Activated B cell treated with CpG ODN at 0.5 μM for 24 hours (primary cell): ENCODE measurements at regions of chr9 and their contacts with region 1.

Region 1: DNA sequence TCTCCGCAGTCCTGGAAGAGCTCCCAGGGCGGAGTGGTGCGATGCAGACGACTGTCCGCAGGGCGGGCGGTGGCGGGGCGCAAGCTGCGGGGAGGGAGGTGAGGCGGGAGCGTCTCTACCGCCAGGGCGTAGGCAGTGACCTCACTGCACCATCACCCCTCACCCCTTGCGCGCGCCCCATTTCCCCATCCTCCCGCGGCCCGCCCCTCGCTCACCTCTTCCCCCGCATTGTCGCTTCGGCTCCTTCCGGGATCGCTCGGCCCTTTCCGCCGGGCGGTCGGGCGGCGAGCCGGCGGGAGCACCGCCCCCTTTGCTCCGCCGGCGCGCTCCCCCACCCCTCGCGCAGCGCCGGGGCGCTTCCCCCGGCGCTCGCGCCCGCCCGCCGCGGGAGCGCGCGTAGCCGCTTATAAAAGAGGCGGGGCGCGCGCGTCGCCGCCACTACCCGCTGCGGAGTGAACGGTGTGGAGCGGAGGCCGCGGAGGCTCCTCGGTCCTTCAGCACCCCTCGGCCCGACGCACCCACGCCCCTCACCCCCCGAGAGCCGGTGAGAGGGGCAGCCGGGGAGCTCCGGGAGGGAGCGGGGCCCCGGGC is at the start of gene SPTAN1:
- DNase-seq: peak; percentile 94
- ATAC-seq: peak; percentile 92
- H3K4me3 Mint-ChIP-seq: peak within 1 kb of the TSS; percentile 90
- H3K27ac Mint-ChIP-seq: peak within 1 kb of the TSS; percentile 90
- H3K4me1 Mint-ChIP-seq: peaks cover 22% of the 10 kb centered on the region
- H3K27me3 Mint-ChIP-seq: no peaks in the 10 kb centered on the region
- CTCF ChIP-seq: no peak
- total RNA-seq, gene SPTAN1: 208 and 237 TPM in 2 replicates

Region 2: GRCh38 chr9:128370826-128371621 is 181.2 kb before region 1 on chr9 and contains the start of gene URM1:
- CTCF ChIA-PET with region 1: no interaction called
- POLR2A ChIA-PET with region 1: interaction called, 10 read pairs
- intact Hi-C with region 1: loop called (anchors 2 kb)
- DNase-seq: peak; percentile 96
- ATAC-seq: peak; percentile 91
- H3K4me3 Mint-ChIP-seq: peak within 1 kb of the TSS; percentile 97
- H3K27ac Mint-ChIP-seq: peak within 1 kb of the TSS; percentile 94
- H3K4me1 Mint-ChIP-seq: peaks cover 31% of the 10 kb centered on the region
- H3K27me3 Mint-ChIP-seq: no peaks in the 10 kb centered on the region
- CTCF ChIP-seq: no peak
- total RNA-seq, gene URM1: 55.8 and 65.1 TPM in 2 replicates

Region 3: DNA sequence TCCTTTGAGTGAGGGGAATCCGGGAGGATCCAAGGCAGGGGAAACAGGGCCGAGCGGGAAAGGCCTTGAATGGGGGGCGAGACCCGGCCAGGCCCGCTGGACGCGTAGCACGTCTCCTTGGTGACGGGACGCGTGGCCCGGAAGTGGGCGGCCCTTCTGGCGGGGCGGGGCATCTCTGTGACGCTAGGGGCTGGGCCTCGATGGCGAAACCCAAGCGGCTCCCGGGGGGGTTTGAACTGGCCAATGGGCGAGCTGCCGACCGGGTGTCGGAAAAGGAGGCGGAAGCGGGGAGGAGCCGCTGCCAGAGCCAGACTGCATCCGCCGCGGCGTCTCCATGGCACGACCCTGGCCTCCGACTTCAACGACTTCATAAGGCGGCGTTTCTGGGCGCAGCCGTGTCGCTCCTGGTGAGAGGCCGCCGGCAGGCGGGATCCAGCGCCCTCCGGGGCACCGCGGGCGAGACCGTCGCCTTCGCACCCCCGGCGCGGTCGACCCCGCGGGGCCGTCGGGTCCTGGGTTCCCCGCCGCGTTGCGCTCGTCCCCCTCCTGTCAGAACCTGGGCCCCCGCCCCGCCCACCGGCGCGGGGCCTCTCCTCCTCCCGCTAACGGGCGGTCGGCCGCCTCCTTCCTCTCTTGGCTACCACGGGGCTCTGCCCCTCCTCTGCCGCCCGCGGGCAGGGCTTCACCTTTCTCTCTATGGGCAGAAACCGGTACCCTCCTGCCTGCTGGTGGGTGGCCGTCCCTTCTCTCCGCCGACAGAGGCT is 96.2 kb before region 1 on chr9 and contains the start of gene ODF2:
- CTCF ChIA-PET with region 1: no interaction called
- POLR2A ChIA-PET with region 1: interaction called, 5 read pairs
- intact Hi-C with region 1: loop called (anchors 1 kb)
- DNase-seq: peak; percentile 99
- ATAC-seq: peak; percentile 88
- H3K4me3 Mint-ChIP-seq: peak within 1 kb of the TSS; percentile 88
- H3K27ac Mint-ChIP-seq: peak within 1 kb of the TSS; percentile 83
- H3K4me1 Mint-ChIP-seq: peaks cover 14% of the 10 kb centered on the region
- H3K27me3 Mint-ChIP-seq: no peaks in the 10 kb centered on the region
- CTCF ChIP-seq: no peak
- total RNA-seq, gene ODF2: 41.2 and 45.7 TPM in 2 replicates

Region 4: GRCh38 chr9:128523199-128523925 is 28.9 kb before region 1 on chr9:
- CTCF ChIA-PET with region 1: no interaction called
- POLR2A ChIA-PET with region 1: interaction called, 11 read pairs
- intact Hi-C with region 1: no loop called
- DNase-seq: no peak
- ATAC-seq: no peak
- H3K4me3 Mint-ChIP-seq: no peak overlapping the region
- H3K27ac Mint-ChIP-seq: no peak overlapping the region
- H3K4me1 Mint-ChIP-seq: no peaks in the 10 kb centered on the region
- H3K27me3 Mint-ChIP-seq: no peaks in the 10 kb centered on the region
- CTCF ChIP-seq: no peak

Region 5: GRCh38 chr9:128714586-128715435 is 162.6 kb after region 1 on chr9:
- CTCF ChIA-PET with region 1: no interaction called
- POLR2A ChIA-PET with region 1: no interaction called
- intact Hi-C with region 1: no loop called
- DNase-seq: no peak
- ATAC-seq: no peak
- H3K4me3 Mint-ChIP-seq: no peak overlapping the region
- H3K27ac Mint-ChIP-seq: no peak overlapping the region
- H3K4me1 Mint-ChIP-seq: no peaks in the 10 kb centered on the region
- H3K27me3 Mint-ChIP-seq: no peaks in the 10 kb centered on the region
- CTCF ChIP-seq: no peak

Region 6: DNA sequence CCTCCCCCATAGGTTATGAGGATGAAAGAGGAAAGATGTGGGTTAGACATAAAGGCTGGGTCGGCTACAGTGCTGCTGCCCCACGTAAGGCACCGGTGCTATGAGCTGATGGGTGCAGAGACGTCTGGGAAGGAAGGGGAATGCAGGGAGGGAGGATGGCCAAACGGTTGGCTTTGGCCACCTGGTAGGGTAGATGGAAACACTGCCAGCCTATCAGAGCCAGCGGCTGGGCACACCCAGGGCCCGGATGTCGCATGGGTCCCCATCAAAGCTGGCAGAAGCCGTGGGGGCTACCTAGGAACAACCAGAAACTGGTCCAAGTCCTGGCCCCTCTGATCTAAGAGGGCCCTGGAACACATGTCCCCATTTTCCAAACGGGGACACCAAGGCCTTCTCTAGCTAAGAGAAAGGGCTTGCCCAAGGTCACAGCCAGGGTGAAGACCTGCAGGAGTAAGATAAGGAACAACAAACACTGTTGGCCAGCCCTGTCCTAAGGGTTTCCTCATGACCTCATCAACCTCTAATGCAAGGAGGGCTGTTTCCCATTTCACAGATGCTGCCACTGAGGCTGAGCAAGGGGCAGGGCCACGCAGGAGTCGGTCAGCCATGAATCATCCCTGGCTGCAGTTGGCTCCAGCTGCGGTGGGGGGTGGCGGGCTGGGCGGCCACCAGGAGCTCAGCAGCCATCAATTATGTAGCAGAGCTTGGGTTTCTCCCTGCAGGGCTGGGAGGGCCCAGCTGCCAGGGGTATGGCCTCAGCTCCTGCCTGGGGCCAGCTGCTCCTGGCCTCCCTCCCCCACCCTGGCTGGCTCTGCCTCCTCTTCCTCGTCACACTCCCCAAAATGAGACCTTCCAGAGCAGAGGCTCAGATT is 471.0 kb after region 1 on chr9:
- CTCF ChIA-PET with region 1: no interaction called
- POLR2A ChIA-PET with region 1: interaction called, 12 read pairs
- intact Hi-C with region 1: loop called (anchors 2 kb)
- DNase-seq: no peak
- ATAC-seq: no peak
- H3K4me3 Mint-ChIP-seq: no peak overlapping the region
- H3K27ac Mint-ChIP-seq: no peak overlapping the region
- H3K4me1 Mint-ChIP-seq: peaks cover 29% of the 10 kb centered on the region
- H3K27me3 Mint-ChIP-seq: no peaks in the 10 kb centered on the region
- CTCF ChIP-seq: no peak